SK-N-SH (cell line): ENCODE measurements at regions of chr18 and their contacts with region 1.

Region 1: DNA sequence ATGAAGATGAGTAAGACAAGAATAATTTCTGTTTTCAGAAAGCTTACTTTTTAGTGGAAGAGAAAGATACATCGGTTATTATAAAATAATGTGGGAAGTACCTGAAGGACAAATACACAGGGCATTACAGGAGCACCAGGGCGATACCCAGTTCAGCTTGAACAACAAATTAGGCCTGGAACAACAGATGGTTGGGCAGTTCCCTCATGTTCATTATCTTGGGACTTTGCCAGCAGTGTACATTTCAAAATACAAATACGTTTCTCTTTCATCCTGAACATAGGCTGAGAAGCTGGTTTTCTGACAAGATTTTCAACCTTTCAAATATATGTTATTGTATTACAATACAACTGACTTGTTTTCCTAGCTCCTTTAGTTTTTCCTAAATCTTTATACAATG is 79.6 kb downstream of the TGIF1 start:
- DNase-seq: no peak
- H3K4me3 ChIP-seq: no peak overlapping the region
- H3K27ac ChIP-seq: peak overlapping the region in 1 of 2 experiments; percentile 0; a peak in 2 of 4 replicates
- H3K4me1 ChIP-seq: peaks cover 0 to 33% of the 10 kb centered on the region in 2 experiments; a peak in 2 of 4 replicates
- H3K27me3 ChIP-seq: no peaks in the 10 kb centered on the region
- CTCF ChIP-seq: no peak
- EP300 ChIP-seq: no peak
- RAD21 ChIP-seq: no peak

Region 2: DNA sequence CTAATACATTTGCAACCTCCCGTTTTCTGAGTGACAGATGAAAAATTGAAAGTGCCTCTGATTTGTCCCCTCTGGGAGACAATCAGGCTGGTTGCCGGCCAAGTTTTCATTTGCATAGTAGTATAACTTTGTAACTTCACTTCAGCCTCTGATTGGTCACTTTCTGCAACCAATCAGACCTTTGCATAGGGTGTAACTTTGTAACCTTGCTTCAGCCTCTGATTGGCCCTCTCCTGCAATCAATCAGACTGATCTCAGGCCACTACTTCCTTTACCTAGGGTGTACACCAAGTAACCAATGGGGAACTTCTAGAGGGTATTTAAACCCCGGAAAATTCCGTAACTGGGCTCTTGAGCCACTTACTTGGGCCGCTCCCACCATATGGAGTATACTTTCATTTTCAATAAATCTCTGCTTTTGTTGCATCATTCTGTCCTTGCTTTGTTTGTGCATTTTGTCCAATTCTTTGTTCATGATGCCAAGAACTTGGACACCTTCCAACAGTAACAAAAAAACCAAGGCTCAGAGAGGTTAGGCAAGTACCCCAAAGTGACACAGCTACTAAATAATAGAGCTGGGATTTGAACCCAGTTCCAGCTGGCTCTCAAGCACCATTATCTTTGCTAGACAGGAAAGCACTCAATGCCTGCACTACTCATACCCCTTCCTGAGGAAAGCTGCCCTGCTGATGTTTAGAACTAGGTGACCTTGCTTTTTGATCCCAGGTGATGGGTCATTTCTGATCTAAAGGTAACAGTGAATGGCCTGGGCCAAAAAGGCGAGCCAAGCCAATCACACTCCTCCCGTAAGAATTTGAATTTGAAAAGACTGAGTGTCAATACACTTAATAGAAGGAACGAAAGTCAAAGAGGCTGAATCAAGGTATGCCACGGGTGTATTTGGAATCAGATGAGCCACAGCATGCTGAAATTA is 298.9 kb before region 1 on chr18:
- CTCF ChIA-PET with region 1: no interaction called
- POLR2A ChIA-PET with region 1: no interaction called
- DNase-seq: no peak
- H3K4me3 ChIP-seq: no peak overlapping the region
- H3K27ac ChIP-seq: no peak overlapping the region
- H3K4me1 ChIP-seq: no peaks in the 10 kb centered on the region
- H3K27me3 ChIP-seq: no peaks in the 10 kb centered on the region
- CTCF ChIP-seq: no peak
- EP300 ChIP-seq: no peak
- RAD21 ChIP-seq: no peak

Region 3: DNA sequence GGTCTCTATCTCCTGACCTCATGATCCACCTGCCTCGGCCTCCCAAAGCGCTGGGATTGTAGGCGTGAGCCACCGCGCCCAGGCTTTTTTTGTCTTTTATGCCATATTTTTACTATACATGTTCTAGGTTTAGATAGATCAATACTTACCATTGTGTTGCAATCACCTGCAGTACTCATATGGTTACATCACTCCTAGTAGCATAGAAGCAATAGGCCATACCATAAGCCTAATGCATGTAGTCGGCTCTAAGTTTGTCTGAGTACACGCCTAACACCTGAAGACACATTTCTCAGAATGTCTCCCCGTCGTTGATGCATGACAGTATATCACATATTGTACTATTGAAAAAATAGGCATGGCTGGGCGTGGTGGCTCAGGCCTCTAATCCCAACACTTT is 106.7 kb before region 1 on chr18:
- CTCF ChIA-PET with region 1: no interaction called
- POLR2A ChIA-PET with region 1: no interaction called
- DNase-seq: no peak
- H3K4me3 ChIP-seq: no peak overlapping the region
- H3K27ac ChIP-seq: no peak overlapping the region
- H3K4me1 ChIP-seq: no peaks in the 10 kb centered on the region
- H3K27me3 ChIP-seq: no peaks in the 10 kb centered on the region
- CTCF ChIP-seq: no peak
- EP300 ChIP-seq: no peak
- RAD21 ChIP-seq: no peak

Region 4: DNA sequence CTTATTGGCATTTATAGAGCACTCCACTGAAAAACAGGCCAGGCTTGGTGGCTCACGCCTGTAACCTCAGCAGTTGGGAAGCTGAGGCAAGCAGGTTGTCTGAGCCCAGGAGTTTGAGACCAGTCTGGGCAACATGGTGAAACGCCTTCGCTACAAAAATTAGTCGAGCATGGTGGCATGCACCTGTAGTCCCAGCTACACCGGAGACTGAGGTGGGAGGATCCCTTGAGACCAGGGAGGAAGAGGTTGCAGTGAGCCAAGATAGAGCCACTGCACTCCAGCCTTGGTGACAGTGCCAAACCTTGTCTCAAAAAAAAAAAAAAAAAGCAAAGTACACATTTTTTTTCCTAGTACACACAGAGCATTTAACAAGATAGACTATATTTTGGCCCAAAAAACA is 16.5 kb after region 1 on chr18:
- CTCF ChIA-PET with region 1: interaction called, 14 read pairs
- POLR2A ChIA-PET with region 1: no interaction called
- DNase-seq: no peak
- H3K4me3 ChIP-seq: no peak overlapping the region
- H3K27ac ChIP-seq: no peak overlapping the region
- H3K4me1 ChIP-seq: no peaks in the 10 kb centered on the region
- H3K27me3 ChIP-seq: no peaks in the 10 kb centered on the region
- CTCF ChIP-seq: no peak
- EP300 ChIP-seq: no peak
- RAD21 ChIP-seq: no peak

Region 5: GRCh38 chr18:3560755-3561154 is 31.2 kb after region 1 on chr18:
- CTCF ChIA-PET with region 1: no interaction called
- POLR2A ChIA-PET with region 1: no interaction called
- DNase-seq: no peak
- H3K4me3 ChIP-seq: no peak overlapping the region
- H3K27ac ChIP-seq: no peak overlapping the region
- H3K4me1 ChIP-seq: no peaks in the 10 kb centered on the region
- H3K27me3 ChIP-seq: no peaks in the 10 kb centered on the region
- CTCF ChIP-seq: no peak
- EP300 ChIP-seq: no peak
- RAD21 ChIP-seq: no peak

Region 6: GRCh38 chr18:3806656-3807055 is 277.1 kb after region 1 on chr18:
- CTCF ChIA-PET with region 1: no interaction called
- POLR2A ChIA-PET with region 1: no interaction called
- DNase-seq: no peak
- H3K4me3 ChIP-seq: no peak overlapping the region
- H3K27ac ChIP-seq: no peak overlapping the region
- H3K4me1 ChIP-seq: no peaks in the 10 kb centered on the region
- H3K27me3 ChIP-seq: peaks cover 27% of the 10 kb centered on the region
- CTCF ChIP-seq: no peak
- EP300 ChIP-seq: no peak
- RAD21 ChIP-seq: no peak